PC-9 (cell line): ENCODE measurements at regions of chr7 and their contacts with region 1.

Region 1: DNA sequence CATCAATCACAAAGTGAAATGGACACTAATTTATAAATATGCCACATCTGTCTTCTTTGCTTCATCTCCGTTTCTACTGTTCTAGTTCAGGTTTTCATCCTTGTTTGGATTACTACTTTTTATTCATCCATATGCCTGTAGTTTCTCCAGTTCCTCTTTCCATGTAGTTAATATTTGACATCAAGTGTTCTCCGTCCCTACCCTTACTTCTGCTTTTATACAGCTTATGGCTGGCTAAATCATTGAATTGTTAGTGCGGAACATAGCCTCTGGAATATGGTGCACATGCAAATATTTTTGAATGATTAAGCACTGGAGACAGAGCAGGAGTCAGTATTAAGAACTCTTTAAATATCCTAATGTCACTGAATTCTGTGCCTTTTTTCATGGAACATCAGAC is 230.0 kb upstream of the PPP1R3A start:
- DNase-seq: no peak
- H3K4me3 ChIP-seq: no peak overlapping the region
- H3K27ac ChIP-seq: no peak overlapping the region
- H3K4me1 ChIP-seq: no peaks in the 10 kb centered on the region
- H3K27me3 ChIP-seq: no peaks in the 10 kb centered on the region
- CTCF ChIP-seq: no peak

Region 2: DNA sequence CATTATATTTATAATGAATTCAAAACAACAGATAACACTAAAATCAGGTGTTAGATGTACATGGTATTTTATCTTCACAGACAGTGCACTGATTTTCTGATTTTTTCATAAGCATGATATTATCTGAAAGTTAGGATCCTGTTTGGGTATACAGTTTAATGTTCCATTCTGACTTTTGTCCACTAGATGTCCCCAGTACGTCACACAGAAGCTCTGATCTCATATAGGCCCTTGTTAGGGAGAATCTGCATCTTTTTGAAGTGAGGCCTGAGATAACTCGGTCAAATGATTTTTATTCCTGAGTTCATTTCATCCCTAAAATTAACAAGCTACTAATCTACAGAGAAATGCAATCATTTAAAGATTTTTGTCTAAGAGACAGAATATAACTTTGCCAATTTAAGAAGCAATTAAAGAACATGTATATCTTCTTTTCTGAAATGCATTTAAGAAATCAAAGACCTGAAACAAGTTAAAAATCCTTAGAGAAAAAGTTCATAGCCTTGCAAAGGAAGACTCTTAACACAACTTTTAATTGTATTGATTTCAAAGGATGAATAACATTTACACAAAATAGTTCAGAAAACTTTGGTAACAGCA is 1989.5 kb after region 1 on chr7:
- CTCF ChIA-PET with region 1: interaction called, 15 read pairs
- POLR2A ChIA-PET with region 1: no interaction called
- intact Hi-C with region 1: no loop called
- DNase-seq: peak; percentile 24 to 43
- H3K4me3 ChIP-seq: no peak overlapping the region
- H3K27ac ChIP-seq: no peak overlapping the region
- H3K4me1 ChIP-seq: no peaks in the 10 kb centered on the region
- H3K27me3 ChIP-seq: no peaks in the 10 kb centered on the region
- CTCF ChIP-seq: peak; percentile 82